Right cardiac atrium (tissue), 5 donors: ENCODE measurements at regions of chrX and their contacts with region 1.

Region 1: GRCh38 chrX:24838629-24839028 is 144.9 kb downstream of the POLA1 start:
- DNase-seq: no peak
- ATAC-seq: no peak
- H3K4me3 ChIP-seq: no peak overlapping the region
- H3K27ac ChIP-seq: no peak overlapping the region
- H3K4me1 ChIP-seq: no peaks in the 10 kb centered on the region
- H3K27me3 ChIP-seq: no peaks in the 10 kb centered on the region

Region 2: DNA sequence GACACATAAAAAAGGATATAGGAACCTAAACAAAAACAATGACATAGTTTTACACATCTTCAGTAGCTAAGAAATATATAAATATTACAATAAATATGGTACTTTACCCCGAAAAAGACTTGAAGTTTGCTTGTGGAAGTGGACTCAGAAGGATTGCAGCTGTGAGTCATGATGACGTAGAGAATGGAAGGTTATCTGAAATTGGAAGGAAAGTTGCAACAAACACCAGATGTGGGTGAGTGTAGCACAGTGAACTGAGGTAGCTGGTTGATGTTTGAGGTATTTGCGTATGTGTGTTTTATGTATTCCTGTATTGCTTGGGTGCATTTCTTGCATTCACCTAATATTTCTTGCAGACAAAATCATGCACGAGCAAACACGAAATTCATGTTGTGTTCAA is 64.2 kb after region 1 on chrX:
- intact Hi-C with region 1: loop called in 1 of 4 experiments (anchors 10 kb)
- DNase-seq: no peak
- ATAC-seq: no peak
- H3K4me3 ChIP-seq: no peak overlapping the region
- H3K27ac ChIP-seq: no peak overlapping the region
- H3K4me1 ChIP-seq: no peaks in the 10 kb centered on the region
- H3K27me3 ChIP-seq: no peaks in the 10 kb centered on the region

Region 3: DNA sequence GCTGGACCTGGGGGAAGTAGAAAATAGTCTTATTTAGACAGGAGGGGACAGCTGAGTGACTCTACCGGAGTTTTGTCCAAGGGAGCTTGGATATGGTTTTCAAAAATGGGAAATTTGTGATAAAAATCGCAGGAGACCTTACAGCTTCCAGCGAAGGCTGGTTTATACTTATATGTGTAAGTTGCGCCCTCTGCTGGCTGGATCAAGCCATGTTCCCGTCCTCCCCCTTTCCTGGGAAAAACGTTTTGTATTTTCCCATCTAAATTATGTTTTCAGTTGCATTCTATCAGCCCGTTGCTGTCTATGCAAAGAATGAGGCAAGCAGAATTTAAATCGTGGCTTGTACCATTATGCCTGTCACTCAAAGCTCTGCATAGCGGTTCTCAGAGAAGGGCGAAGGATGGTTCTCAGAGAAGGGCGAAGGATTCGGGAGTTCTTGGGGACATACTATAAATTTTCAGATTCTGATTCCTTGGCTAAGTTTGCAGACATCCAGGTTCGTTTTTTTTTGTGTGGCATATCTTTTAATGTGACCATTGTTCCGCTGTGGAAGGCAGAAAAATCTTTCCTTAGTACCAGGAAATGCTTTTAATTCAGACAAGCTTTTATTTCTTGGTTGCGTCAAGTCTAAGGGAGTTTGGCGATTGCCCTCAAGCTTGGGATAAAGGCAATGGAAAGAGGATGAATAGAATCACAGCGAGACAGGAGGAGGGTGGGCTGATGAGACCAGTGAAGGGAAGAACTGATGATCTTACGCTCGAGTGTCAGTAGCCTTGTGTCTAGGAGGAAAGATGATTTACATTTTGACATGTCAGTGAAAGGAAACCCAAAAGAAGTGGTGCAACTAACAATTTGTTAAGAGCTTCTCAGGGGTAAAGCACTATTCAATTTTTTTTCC is 305.7 kb after region 1 on chrX:
- intact Hi-C with region 1: loop called in 3 of 4 experiments (anchors 5 to 10 kb)
- DNase-seq: peak; percentile 60 to 80 (median 64)
- ATAC-seq: peak in 1 of 2 donors; percentile 51
- H3K4me3 ChIP-seq: no peak overlapping the region
- H3K27ac ChIP-seq: no peak overlapping the region
- H3K4me1 ChIP-seq: no peaks in the 10 kb centered on the region
- H3K27me3 ChIP-seq: no peaks in the 10 kb centered on the region

Region 4: DNA sequence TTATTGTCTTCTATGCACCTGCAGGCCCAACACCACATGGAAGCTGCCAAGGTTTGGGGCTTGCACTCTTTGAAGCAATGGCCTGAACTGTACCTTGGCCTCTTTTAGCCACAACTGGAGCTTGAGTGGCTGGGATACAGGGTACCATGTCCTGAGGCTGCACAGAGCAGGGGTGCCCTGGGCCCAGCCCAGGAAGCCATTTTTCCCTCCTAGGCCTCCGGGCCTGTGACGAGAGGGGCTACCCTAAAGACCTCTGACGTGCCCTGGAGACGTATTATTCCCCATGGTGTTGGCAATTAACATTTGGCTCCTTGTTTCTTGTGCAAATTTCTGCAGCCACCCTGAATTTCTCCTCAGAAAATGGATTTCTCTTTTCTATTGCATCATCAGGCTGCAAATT is 779.6 kb after region 1 on chrX:
- intact Hi-C with region 1: no loop called
- DNase-seq: no peak
- ATAC-seq: no peak
- H3K4me3 ChIP-seq: no peak overlapping the region
- H3K27ac ChIP-seq: no peak overlapping the region
- H3K4me1 ChIP-seq: no peaks in the 10 kb centered on the region
- H3K27me3 ChIP-seq: no peaks in the 10 kb centered on the region